BJ (cell line): ENCODE measurements at regions of chr2 and their contacts with region 1.

Region 1: GRCh38 chr2:226362980-226363379 is 436.6 kb downstream of the IRS1 start:
- DNase-seq: no peak
- H3K4me3 ChIP-seq: no peak overlapping the region
- H3K27me3 ChIP-seq: no peaks in the 10 kb centered on the region
- CTCF ChIP-seq: no peak

Region 2: DNA sequence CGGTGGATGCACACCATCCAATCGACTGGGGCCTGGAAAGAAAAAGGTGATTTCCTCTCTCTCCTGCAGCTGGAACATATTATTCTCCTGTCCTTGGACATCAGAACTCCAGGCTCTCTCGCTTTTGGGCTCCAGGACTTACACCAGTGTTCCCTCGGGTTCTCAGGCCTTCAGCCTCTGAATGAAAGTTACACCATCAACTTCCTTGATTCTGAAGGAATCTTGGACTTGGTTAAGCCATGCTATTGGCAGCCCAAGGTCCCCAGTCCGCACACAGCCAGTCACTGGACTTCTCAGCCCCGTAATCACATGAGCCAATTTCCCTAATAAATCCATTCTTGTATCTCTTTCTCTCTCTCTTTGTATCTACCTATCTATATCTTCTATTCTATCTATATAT is 17.7 kb after region 1 on chr2:
- CTCF ChIA-PET with region 1: no interaction called
- POLR2A ChIA-PET with region 1: no interaction called
- DNase-seq: no peak
- H3K4me3 ChIP-seq: no peak overlapping the region
- H3K27me3 ChIP-seq: no peaks in the 10 kb centered on the region
- CTCF ChIP-seq: no peak

Region 3: GRCh38 chr2:226581661-226582060 is 218.7 kb after region 1 on chr2:
- CTCF ChIA-PET with region 1: no interaction called
- POLR2A ChIA-PET with region 1: interaction called, 10 read pairs
- DNase-seq: no peak
- H3K4me3 ChIP-seq: no peak overlapping the region
- H3K27me3 ChIP-seq: no peaks in the 10 kb centered on the region
- CTCF ChIP-seq: no peak